CD8-positive, alpha-beta T cell (primary cell): ENCODE measurements at regions of chr11 and their contacts with region 1.

Region 1: DNA sequence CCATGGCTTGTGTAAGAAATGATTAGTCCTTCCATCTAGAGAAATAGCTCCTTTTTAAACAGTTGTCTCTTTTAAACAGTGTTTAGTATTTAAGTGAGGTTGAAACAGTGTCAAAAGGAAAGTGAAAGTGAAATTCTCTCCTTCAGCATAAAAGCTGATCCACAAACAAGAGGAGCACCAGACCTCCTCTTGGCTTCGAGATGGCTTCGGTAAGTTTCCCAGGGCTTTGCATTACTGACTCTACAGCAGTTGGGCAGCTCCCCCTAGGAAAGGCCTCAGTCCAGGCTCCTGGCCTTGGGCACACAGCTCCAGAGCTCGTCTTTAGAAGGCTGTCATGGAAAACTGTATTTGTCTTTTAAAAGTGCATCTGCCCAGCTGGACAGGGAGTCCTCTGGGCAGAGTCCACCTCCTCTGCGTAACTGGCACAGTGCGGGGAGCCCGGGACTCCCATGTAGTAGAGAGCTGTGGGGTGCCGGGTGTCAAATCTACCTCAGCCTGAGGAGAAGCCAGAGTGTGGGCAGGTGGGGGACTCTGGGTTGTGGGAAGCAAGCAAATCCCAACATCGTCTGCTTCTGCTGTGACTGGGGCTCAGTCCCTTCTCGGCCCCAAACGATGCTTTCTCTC is at the start of gene PLAAT4:
- DNase-seq: peak in 5 of 9 experiments; percentile 21 to 81 (median 65)
- ATAC-seq: peak; percentile 53
- H3K4me3 ChIP-seq: peak within 1 kb of the TSS; percentile 71 to 85
- H3K4me3 Mint-ChIP-seq: peak within 1 kb of the TSS; percentile 92
- H3K27ac ChIP-seq: peak within 1 kb of the TSS; percentile 83 to 84
- H3K27ac Mint-ChIP-seq: peak within 1 kb of the TSS; percentile 97
- H3K4me1 ChIP-seq: peaks cover 84% of the 10 kb centered on the region
- H3K4me1 Mint-ChIP-seq: peaks cover 85% of the 10 kb centered on the region
- H3K27me3 ChIP-seq: no peaks in the 10 kb centered on the region
- H3K27me3 Mint-ChIP-seq: no peaks in the 10 kb centered on the region
- CTCF ChIP-seq: no peak
- total RNA-seq, gene PLAAT4: 81.9 to 84.0 TPM

Region 2: DNA sequence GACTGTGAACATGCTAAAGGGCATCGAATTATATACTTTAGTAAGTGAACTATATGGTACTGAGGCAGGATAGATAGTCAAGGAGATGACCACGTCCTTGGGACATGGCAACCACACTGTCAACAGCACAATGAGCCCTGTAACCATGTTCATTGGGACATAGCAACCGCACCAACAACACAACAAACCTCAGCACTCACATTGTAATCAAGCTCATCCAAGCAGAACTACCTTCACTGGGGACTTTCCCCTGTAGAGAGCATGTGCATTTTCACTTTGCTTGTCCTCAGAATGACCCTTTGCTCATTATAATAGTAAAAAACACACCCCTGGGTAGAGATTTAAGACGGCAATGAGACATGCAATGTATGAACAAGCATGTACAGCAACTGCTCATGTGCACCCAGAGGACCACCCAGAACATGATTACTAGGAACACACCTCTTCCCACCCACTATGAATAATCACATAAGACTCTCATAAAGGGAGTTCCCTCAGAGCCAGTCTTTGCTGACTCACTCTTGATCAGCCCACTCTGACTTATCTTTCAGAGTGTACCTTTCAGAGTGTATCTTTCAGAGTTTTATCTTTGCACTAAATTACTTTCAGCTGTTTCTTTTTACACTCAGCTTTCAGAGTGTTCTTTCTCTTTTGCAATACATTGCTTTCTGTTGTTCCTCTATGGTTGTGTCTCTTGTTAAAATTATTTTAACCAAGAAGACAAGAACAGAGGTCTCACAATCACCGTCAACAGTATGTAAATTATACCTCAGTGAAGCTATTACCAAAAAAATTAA is 30.5 kb after region 1 on chr11:
- CTCF ChIA-PET with region 1: interaction called, 3 read pairs
- POLR2A ChIA-PET with region 1: interaction called, 6 read pairs
- intact Hi-C with region 1: loop called (anchors 1 to 5 kb)
- DNase-seq: peak in 8 of 9 experiments; percentile 41 to 95 (median 62)
- ATAC-seq: peak; percentile 88
- H3K4me3 ChIP-seq: no peak overlapping the region
- H3K4me3 Mint-ChIP-seq: peak overlapping the region; percentile 13
- H3K27ac ChIP-seq: peak overlapping the region; percentile 50 to 90
- H3K27ac Mint-ChIP-seq: peak overlapping the region; percentile 90
- H3K4me1 ChIP-seq: peaks cover 33% of the 10 kb centered on the region
- H3K4me1 Mint-ChIP-seq: peaks cover 44% of the 10 kb centered on the region
- H3K27me3 ChIP-seq: no peaks in the 10 kb centered on the region
- H3K27me3 Mint-ChIP-seq: no peaks in the 10 kb centered on the region
- CTCF ChIP-seq: no peak

Region 3: GRCh38 chr11:63614136-63614664 is 77.4 kb after region 1 on chr11 and contains the start of gene PLAAT3:
- CTCF ChIA-PET with region 1: no interaction called
- POLR2A ChIA-PET with region 1: no interaction called
- intact Hi-C with region 1: loop called in 1 of 2 experiments (anchors 5 kb)
- DNase-seq: peak in 8 of 9 experiments; percentile 14 to 64 (median 32)
- ATAC-seq: peak; percentile 64
- H3K4me3 ChIP-seq: peak within 1 kb of the TSS; percentile 87 to 93
- H3K4me3 Mint-ChIP-seq: peak within 1 kb of the TSS; percentile 88
- H3K27ac ChIP-seq: peak within 1 kb of the TSS; percentile 61 to 66
- H3K27ac Mint-ChIP-seq: peak within 1 kb of the TSS; percentile 82
- H3K4me1 ChIP-seq: no peaks in the 10 kb centered on the region
- H3K4me1 Mint-ChIP-seq: peaks cover 21% of the 10 kb centered on the region
- H3K27me3 ChIP-seq: no peaks in the 10 kb centered on the region
- H3K27me3 Mint-ChIP-seq: no peaks in the 10 kb centered on the region
- CTCF ChIP-seq: no peak
- total RNA-seq, gene PLAAT3: 5.0 to 5.9 TPM

Region 4: DNA sequence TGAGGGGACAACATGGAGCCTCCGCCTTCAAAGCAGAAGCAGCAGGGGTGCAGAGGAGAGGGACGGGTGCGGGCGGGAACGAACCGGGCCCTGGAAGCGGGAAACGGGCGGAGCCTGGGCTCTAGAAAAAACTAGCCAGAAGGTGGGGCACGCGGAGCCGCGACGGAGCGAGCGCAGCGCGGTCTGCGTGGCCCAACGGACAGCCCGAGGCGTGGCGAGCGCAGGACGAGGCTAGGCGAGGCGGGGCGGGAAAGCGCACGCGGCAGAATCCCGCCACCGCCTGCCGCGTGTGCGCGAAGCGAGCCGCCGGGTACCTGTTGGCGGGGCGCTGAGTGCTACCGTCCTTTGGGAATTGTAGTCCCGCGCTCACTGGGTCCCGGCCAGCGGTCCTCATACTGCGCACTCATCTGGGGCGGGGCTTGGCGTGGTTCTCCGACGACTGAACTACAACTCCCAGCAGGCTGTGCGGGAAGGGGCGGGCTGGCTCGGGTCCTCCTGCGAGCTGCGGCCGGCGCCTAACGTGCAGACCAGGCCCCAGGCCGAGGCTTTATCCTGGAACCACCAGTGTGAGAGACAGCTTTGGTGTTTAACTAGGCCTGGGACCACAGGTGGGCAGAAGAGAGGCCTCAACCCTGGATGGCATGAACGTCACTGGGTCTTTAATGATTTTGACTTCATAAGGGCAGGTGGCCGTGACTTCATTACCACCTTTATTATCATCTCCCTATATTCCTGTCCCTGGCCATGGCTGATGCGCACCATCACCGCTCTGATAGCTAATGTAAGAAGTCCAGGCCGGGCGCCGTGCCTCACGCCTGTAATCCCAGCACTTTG is 134.8 kb after region 1 on chr11 and contains the start of gene ATL3:
- CTCF ChIA-PET with region 1: no interaction called
- POLR2A ChIA-PET with region 1: interaction called, 3 read pairs
- intact Hi-C with region 1: loop called in 1 of 2 experiments (anchors 5 kb)
- DNase-seq: peak; percentile 87 to 98 (median 96)
- ATAC-seq: peak; percentile 95
- H3K4me3 ChIP-seq: peak within 1 kb of the TSS; percentile 79 to 91
- H3K4me3 Mint-ChIP-seq: peak within 1 kb of the TSS; percentile 86
- H3K27ac ChIP-seq: peak within 1 kb of the TSS; percentile 65 to 74
- H3K27ac Mint-ChIP-seq: peak within 1 kb of the TSS; percentile 87
- H3K4me1 ChIP-seq: peaks cover 19% of the 10 kb centered on the region
- H3K4me1 Mint-ChIP-seq: peaks cover 29% of the 10 kb centered on the region
- H3K27me3 ChIP-seq: no peaks in the 10 kb centered on the region
- H3K27me3 Mint-ChIP-seq: no peaks in the 10 kb centered on the region
- CTCF ChIP-seq: no peak
- total RNA-seq, gene ATL3: 11.6 to 11.8 TPM